Endothelial cell of umbilical vein (primary cell): ENCODE measurements at regions of chr4 and their contacts with region 1.

Region 1: GRCh38 chr4:77288886-77289285 is 131.9 kb downstream of the CCNG2 start:
- DNase-seq: no peak
- H3K4me3 ChIP-seq: no peak overlapping the region
- H3K27ac ChIP-seq: no peak overlapping the region
- H3K4me1 ChIP-seq: no peaks in the 10 kb centered on the region
- H3K27me3 ChIP-seq: no peaks in the 10 kb centered on the region
- CTCF ChIP-seq: no peak
- POLR2A ChIP-seq: no peak

Region 2: GRCh38 chr4:77232653-77233052 is 56.2 kb before region 1 on chr4:
- CTCF ChIA-PET with region 1: no interaction called
- POLR2A ChIA-PET with region 1: no interaction called
- dilution Hi-C with region 1: no loop called
- intact Hi-C with region 1: loop called (anchors 2 kb)
- DNase-seq: no peak
- H3K4me3 ChIP-seq: no peak overlapping the region
- H3K27ac ChIP-seq: no peak overlapping the region
- H3K4me1 ChIP-seq: no peaks in the 10 kb centered on the region
- H3K27me3 ChIP-seq: peaks cover 9 to 17% of the 10 kb centered on the region in 2 experiments
- CTCF ChIP-seq: no peak
- POLR2A ChIP-seq: no peak

Region 3: DNA sequence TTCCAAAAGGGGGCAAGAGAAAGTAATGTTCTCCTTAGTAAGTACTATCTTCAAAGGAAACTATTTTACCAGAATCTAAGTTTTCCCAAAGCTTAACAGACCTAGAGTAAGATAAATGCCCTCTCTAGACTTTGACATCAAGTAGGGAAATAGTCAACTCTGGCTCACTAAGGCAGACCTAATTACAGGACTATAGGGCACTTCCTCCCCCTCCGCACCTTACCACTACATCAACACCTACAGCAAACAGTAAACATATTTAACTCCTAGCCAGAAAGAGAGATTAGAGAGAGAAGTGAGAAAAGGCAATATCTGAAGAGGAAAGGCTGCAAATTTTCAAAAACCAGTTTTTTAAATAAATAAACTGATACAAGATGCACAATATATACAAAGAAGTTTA is 469.9 kb after region 1 on chr4:
- CTCF ChIA-PET with region 1: no interaction called
- POLR2A ChIA-PET with region 1: no interaction called
- dilution Hi-C with region 1: no loop called
- intact Hi-C with region 1: no loop called
- DNase-seq: no peak
- H3K4me3 ChIP-seq: no peak overlapping the region
- H3K27ac ChIP-seq: no peak overlapping the region
- H3K4me1 ChIP-seq: no peaks in the 10 kb centered on the region
- H3K27me3 ChIP-seq: no peaks in the 10 kb centered on the region
- CTCF ChIP-seq: no peak
- POLR2A ChIP-seq: no peak

Region 4: DNA sequence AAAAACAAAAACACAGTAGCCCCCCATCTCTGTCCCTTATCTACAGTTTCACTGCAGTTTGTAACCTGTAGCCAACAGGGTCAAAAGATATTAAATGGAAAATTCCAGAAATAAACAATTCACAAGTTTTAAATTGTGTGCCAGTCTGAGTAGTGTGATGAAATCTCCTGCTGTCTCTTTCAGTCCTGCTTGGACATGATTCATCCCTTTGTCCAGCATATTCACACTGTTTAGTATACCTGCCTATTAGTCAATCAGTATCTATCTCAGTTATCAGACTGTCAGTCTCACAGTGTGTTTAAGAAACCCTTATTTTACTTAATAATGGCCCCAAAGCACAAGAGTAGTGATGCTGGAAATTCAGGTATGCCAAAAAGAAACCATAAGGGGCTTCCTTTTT is 508.4 kb after region 1 on chr4:
- CTCF ChIA-PET with region 1: no interaction called
- POLR2A ChIA-PET with region 1: no interaction called
- dilution Hi-C with region 1: no loop called
- intact Hi-C with region 1: no loop called
- DNase-seq: no peak
- H3K4me3 ChIP-seq: no peak overlapping the region
- H3K27ac ChIP-seq: no peak overlapping the region
- H3K4me1 ChIP-seq: peaks cover 19% of the 10 kb centered on the region
- H3K27me3 ChIP-seq: no peaks in the 10 kb centered on the region
- CTCF ChIP-seq: no peak
- POLR2A ChIP-seq: no peak